ENCODE measurements at regions of chr20 and their contacts with region 1.

Region 1: DNA sequence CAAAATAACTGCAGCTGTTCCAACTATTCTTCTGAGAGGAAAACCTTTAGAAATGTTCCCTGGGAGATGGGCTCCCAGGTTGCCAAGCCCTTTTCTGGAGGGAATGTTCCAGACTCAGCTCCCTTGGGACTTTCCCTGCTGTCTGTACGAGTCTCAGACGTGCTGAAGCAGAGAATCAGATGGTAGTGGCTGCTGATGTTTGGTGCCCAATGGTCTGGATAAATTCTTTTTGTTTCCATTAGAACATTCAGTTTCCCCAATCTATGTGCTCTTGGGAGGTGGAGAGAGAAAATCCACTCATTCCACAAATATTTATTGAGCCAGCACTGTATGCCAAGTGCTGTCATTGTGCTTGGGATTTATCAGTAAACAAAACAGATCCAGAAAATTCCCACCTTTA is 40.0 kb downstream of the SNHG17 start:
- DNase-seq: no peak
- H3K4me3 ChIP-seq: no peak overlapping the region
- H3K27ac ChIP-seq: no peak overlapping the region
- H3K4me1 ChIP-seq: no peaks in the 10 kb centered on the region
- H3K27me3 ChIP-seq: no peaks in the 10 kb centered on the region
- CTCF ChIP-seq: no peak
- EP300 ChIP-seq: no peak
- POLR2A ChIP-seq: no peak
- RAD21 ChIP-seq: no peak

Region 2: GRCh38 chr20:38321959-38322598 is 73.1 kb before region 1 on chr20:
- CTCF ChIA-PET with region 1: no interaction called
- POLR2A ChIA-PET with region 1: no interaction called
- DNase-seq: no peak
- H3K4me3 ChIP-seq: no peak overlapping the region
- H3K27ac ChIP-seq: no peak overlapping the region
- H3K4me1 ChIP-seq: no peaks in the 10 kb centered on the region
- H3K27me3 ChIP-seq: no peaks in the 10 kb centered on the region
- CTCF ChIP-seq: peak; percentile 45 to 66 (median 59)
- EP300 ChIP-seq: no peak
- POLR2A ChIP-seq: no peak
- RAD21 ChIP-seq: peak; percentile 61 to 70

Region 3: GRCh38 chr20:38406476-38406875 is 11.3 kb after region 1 on chr20:
- CTCF ChIA-PET with region 1: interaction called, 17 read pairs
- POLR2A ChIA-PET with region 1: no interaction called
- DNase-seq: no peak
- H3K4me3 ChIP-seq: no peak overlapping the region
- H3K27ac ChIP-seq: no peak overlapping the region
- H3K4me1 ChIP-seq: peaks cover 0 to 3% (median 0%) of the 10 kb centered on the region in 4 experiments; a peak in 1 of 7 replicates
- H3K27me3 ChIP-seq: no peaks in the 10 kb centered on the region
- CTCF ChIP-seq: no peak
- EP300 ChIP-seq: no peak
- POLR2A ChIP-seq: no peak
- RAD21 ChIP-seq: no peak

Region 4: GRCh38 chr20:38523697-38524096 is 128.5 kb after region 1 on chr20:
- CTCF ChIA-PET with region 1: no interaction called
- POLR2A ChIA-PET with region 1: no interaction called
- DNase-seq: no peak
- H3K4me3 ChIP-seq: no peak overlapping the region
- H3K27ac ChIP-seq: no peak overlapping the region
- H3K4me1 ChIP-seq: no peaks in the 10 kb centered on the region
- H3K27me3 ChIP-seq: no peaks in the 10 kb centered on the region
- CTCF ChIP-seq: no peak
- EP300 ChIP-seq: no peak
- POLR2A ChIP-seq: no peak
- RAD21 ChIP-seq: no peak

Measured in H1 (cell line).